SK-N-SH (cell line): ENCODE measurements at regions of chr5 and their contacts with region 1.

Region 1: GRCh38 chr5:141149812-141150211 is at the start of gene PCDHB6:
- DNase-seq: peak; percentile 76
- H3K4me3 ChIP-seq: peak within 1 kb of the TSS; percentile 54 to 65
- H3K27ac ChIP-seq: peak within 1 kb of the TSS in 1 of 2 experiments; percentile 53; a peak in 1 of 4 replicates
- H3K4me1 ChIP-seq: no peaks in the 10 kb centered on the region
- H3K27me3 ChIP-seq: no peaks in the 10 kb centered on the region
- CTCF ChIP-seq: peak; percentile 56
- EP300 ChIP-seq: no peak
- RAD21 ChIP-seq: peak; percentile 73
- polyA plus RNA-seq, gene PCDHB6: 3.9 and 5.0 TPM in 2 replicates

Region 2: DNA sequence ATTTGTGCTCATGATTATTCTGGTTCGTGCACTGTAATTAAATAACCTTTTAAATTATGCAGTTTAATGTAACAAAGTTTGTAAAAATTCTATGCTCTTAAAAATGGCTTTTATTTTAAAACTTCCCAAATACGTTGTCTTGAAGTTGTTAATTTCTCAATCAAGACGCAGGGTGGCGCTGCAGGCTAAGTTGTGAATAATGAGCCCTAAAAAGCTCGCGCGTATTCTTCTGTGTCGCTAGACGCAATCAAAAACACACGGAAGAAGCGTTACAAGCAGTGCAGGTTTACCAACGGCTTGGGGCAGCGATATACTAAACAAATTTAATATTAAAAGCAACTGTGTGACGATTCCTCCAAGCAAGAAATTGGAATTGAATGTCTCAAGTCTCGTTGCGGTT is 28.2 kb before region 1 on chr5 and contains the start of gene PCDHB4:
- CTCF ChIA-PET with region 1: interaction called, 13 read pairs
- POLR2A ChIA-PET with region 1: interaction called, 3 read pairs
- DNase-seq: peak; percentile 49
- H3K4me3 ChIP-seq: peak within 1 kb of the TSS; percentile 38 to 41
- H3K27ac ChIP-seq: no peak within 1 kb of the TSS; a peak in 1 of 4 replicates
- H3K4me1 ChIP-seq: peaks cover 0 to 2% of the 10 kb centered on the region in 2 experiments; a peak in 1 of 4 replicates
- H3K27me3 ChIP-seq: no peaks in the 10 kb centered on the region
- CTCF ChIP-seq: peak; percentile 51
- EP300 ChIP-seq: no peak
- RAD21 ChIP-seq: peak; percentile 70
- polyA plus RNA-seq, gene PCDHB4: 0.36 and 0.51 TPM in 2 replicates

Region 3: DNA sequence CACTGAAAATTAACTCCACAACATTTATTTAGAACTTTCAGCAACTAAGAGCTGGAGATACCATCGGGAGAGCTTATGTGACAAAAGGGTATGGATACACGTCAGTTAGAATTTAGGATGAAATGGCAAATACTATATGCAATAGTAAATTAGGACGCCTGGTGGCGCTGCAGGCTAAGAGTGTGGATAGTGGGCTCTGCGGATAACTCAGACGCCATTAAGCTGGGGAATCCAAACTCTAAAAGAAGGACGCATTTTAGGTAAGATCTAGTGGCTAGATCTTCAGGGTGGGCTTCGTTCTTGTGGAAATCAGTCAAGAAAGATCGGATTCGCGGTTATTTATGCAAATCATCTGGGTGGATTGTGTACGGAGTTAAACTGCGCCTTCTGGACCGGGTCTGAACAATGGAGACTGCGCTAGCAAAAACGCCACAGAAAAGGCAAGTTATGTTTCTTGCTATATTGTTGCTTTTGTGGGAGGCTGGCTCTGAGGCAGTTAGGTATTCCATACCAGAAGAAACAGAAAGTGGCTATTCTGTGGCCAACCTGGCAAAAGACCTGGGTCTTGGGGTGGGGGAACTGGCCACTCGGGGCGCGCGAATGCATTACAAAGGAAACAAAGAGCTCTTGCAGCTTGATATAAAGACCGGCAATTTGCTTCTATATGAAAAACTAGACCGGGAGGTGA is 14.6 kb before region 1 on chr5 and contains the start of gene PCDHB5:
- CTCF ChIA-PET with region 1: interaction called, 10 read pairs
- POLR2A ChIA-PET with region 1: no interaction called
- DNase-seq: no peak
- H3K4me3 ChIP-seq: no peak within 1 kb of the TSS; a peak in 2 of 4 replicates
- H3K27ac ChIP-seq: no peak within 1 kb of the TSS
- H3K4me1 ChIP-seq: no peaks in the 10 kb centered on the region
- H3K27me3 ChIP-seq: no peaks in the 10 kb centered on the region
- CTCF ChIP-seq: peak; percentile 36
- EP300 ChIP-seq: no peak
- RAD21 ChIP-seq: no peak
- polyA plus RNA-seq, gene PCDHB5: 0.08 and 0.10 TPM in 2 replicates